ENCODE measurements at regions of chr16 and their contacts with region 1.

Region 1: GRCh38 chr16:68760671-68761275 is 23.7 kb downstream of the CDH1 start:
- DNase-seq: peak; percentile 99
- H3K4me3 ChIP-seq: no peak overlapping the region
- H3K27ac ChIP-seq: peak overlapping the region; percentile 99
- H3K4me1 ChIP-seq: peaks cover 49% of the 10 kb centered on the region
- H3K27me3 ChIP-seq: no peaks in the 10 kb centered on the region
- CTCF ChIP-seq: no peak

Region 2: GRCh38 chr16:68644715-68645493 is 115.9 kb before region 1 on chr16 and contains the start of gene CDH3:
- CTCF ChIA-PET with region 1: no interaction called
- dilution Hi-C with region 1: no loop called
- in situ Hi-C with region 1: no loop called
- intact Hi-C with region 1: loop called (anchors 5 kb)
- DNase-seq: peak; percentile 97
- H3K4me3 ChIP-seq: peak within 1 kb of the TSS; percentile 82 to 94 (median 89)
- H3K27ac ChIP-seq: peak within 1 kb of the TSS; percentile 87
- H3K4me1 ChIP-seq: peaks cover 59% of the 10 kb centered on the region
- H3K27me3 ChIP-seq: no peaks in the 10 kb centered on the region
- CTCF ChIP-seq: peak in 1 of 2 donors; percentile 31
- total RNA-seq, gene CDH3: 628 to 995 TPM

Region 3: GRCh38 chr16:68668266-68668665 is 92.5 kb before region 1 on chr16:
- CTCF ChIA-PET with region 1: no interaction called
- dilution Hi-C with region 1: loop called (anchors 5 kb)
- in situ Hi-C with region 1: no loop called
- intact Hi-C with region 1: no loop called
- DNase-seq: peak; percentile 100
- H3K4me3 ChIP-seq: peak overlapping the region in 1 of 3 experiments; percentile 12
- H3K27ac ChIP-seq: peak overlapping the region; percentile 99
- H3K4me1 ChIP-seq: peaks cover 65% of the 10 kb centered on the region
- H3K27me3 ChIP-seq: no peaks in the 10 kb centered on the region
- CTCF ChIP-seq: no peak

Region 4: DNA sequence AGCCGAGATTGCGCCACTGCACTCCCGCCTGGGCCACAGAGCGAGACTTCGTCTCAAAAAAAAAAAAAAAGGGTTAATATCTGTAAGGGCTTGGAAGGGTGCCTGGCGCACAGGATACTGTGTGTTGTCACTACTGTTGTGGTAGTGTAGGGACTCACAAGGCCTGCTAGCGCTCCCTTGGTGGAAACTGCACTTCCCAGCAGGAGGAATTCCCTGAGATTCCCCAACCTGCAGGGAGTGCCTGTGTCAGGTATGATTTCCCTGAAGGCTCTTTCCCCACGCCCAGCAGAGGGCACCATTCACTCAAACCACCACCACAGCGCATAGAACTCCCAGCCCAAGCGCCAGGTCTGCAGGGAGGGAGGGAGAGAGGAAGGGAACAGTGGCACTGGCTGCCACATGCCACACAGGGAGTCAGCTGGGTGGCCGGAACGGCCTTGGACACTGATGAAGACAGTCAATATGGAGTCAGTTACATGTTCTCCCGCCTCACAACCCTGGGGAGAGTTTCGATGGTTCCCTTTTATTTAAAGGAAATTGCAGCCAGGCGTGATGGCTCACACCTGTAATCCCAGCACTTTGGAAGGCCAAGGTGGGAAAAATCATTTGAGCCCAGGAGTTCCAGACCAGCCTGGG is 56.4 kb before region 1 on chr16:
- CTCF ChIA-PET with region 1: no interaction called
- dilution Hi-C with region 1: no loop called
- in situ Hi-C with region 1: no loop called
- intact Hi-C with region 1: loop called (anchors 2 kb)
- DNase-seq: peak; percentile 83
- H3K4me3 ChIP-seq: no peak overlapping the region
- H3K27ac ChIP-seq: no peak overlapping the region
- H3K4me1 ChIP-seq: peaks cover 22% of the 10 kb centered on the region
- H3K27me3 ChIP-seq: no peaks in the 10 kb centered on the region
- CTCF ChIP-seq: peak; percentile 84 to 92

Region 5: DNA sequence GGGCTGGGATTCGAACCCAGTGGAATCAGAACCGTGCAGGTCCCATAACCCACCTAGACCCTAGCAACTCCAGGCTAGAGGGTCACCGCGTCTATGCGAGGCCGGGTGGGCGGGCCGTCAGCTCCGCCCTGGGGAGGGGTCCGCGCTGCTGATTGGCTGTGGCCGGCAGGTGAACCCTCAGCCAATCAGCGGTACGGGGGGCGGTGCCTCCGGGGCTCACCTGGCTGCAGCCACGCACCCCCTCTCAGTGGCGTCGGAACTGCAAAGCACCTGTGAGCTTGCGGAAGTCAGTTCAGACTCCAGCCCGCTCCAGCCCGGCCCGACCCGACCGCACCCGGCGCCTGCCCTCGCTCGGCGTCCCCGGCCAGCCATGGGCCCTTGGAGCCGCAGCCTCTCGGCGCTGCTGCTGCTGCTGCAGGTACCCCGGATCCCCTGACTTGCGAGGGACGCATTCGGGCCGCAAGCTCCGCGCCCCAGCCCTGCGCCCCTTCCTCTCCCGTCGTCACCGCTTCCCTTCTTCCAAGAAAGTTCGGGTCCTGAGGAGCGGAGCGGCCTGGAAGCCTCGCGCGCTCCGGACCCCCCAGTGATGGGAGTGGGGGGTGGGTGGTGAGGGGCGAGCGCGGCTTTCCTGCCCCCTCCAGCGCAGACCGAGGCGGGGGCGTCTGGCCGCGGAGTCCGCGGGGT is 23.6 kb before region 1 on chr16 and contains the start of gene CDH1:
- CTCF ChIA-PET with region 1: no interaction called
- dilution Hi-C with region 1: no loop called
- in situ Hi-C with region 1: no loop called
- intact Hi-C with region 1: loop called (anchors 2 kb)
- DNase-seq: peak; percentile 89
- H3K4me3 ChIP-seq: peak within 1 kb of the TSS; percentile 88 to 97 (median 93)
- H3K27ac ChIP-seq: peak within 1 kb of the TSS; percentile 97
- H3K4me1 ChIP-seq: peaks cover 38% of the 10 kb centered on the region
- H3K27me3 ChIP-seq: no peaks in the 10 kb centered on the region
- CTCF ChIP-seq: no peak
- total RNA-seq, gene CDH1: 355 to 369 TPM

Region 6: DNA sequence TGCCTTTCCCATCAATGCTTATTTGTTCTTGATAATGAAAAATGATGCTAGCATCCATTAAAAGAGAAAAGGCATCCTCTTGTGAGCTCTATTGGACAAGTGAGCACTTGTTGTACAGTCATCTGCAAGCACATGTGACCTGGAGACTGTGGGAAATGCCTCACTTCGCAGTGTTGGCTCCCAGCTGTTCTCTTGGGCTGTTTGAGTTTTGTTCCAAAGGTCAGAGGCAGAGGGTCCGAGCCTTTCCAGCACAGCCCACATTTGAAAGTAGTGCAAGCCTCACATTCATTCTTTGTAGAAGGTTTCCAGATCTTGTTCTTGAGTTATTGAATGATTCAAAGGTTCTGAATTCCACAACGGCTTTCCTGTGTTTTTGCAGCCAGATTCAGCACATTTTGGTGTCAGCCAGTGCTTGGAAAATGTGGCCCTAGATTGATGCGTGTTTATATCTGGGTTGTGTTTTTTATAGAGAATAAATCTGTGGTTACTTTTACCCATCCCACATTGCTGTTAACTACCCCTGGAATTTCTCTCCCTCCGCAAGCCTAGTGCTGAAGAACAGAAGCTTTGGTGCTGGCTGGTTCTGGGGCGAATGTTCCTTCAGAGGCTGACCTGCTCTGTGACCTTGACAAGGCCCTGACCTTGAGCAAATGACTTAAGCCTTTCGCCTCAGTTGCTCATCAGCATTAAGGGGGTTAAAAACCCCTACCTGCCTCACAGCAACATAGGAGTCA is 26.1 kb after region 1 on chr16:
- CTCF ChIA-PET with region 1: interaction called, 3 read pairs
- dilution Hi-C with region 1: no loop called
- in situ Hi-C with region 1: no loop called
- intact Hi-C with region 1: loop called (anchors 2 kb)
- DNase-seq: peak; percentile 91
- H3K4me3 ChIP-seq: no peak overlapping the region
- H3K27ac ChIP-seq: peak overlapping the region; percentile 72
- H3K4me1 ChIP-seq: peaks cover 33% of the 10 kb centered on the region
- H3K27me3 ChIP-seq: no peaks in the 10 kb centered on the region
- CTCF ChIP-seq: no peak

Region 7: GRCh38 chr16:68800257-68800875 is 39.6 kb after region 1 on chr16:
- CTCF ChIA-PET with region 1: no interaction called
- dilution Hi-C with region 1: no loop called
- in situ Hi-C with region 1: no loop called
- intact Hi-C with region 1: loop called (anchors 1 kb)
- DNase-seq: peak; percentile 80
- H3K4me3 ChIP-seq: no peak overlapping the region
- H3K27ac ChIP-seq: peak overlapping the region; percentile 47
- H3K4me1 ChIP-seq: peaks cover 39% of the 10 kb centered on the region
- H3K27me3 ChIP-seq: no peaks in the 10 kb centered on the region
- CTCF ChIP-seq: peak; percentile 83 to 89